Panc1 (cell line): ENCODE measurements at regions of chr1 and their contacts with region 1.

Region 1: GRCh38 chr1:113086541-113086940 is 13.5 kb downstream of the LRIG2 start:
- DNase-seq: no peak
- ATAC-seq: no peak
- H3K4me3 ChIP-seq: no peak overlapping the region
- H3K27ac ChIP-seq: no peak overlapping the region
- H3K4me1 ChIP-seq: no peaks in the 10 kb centered on the region
- H3K27me3 ChIP-seq: no peaks in the 10 kb centered on the region
- CTCF ChIP-seq: no peak

Region 2: GRCh38 chr1:112457241-112457640 is 629.3 kb before region 1 on chr1:
- CTCF ChIA-PET with region 1: no interaction called
- POLR2A ChIA-PET with region 1: no interaction called
- in situ Hi-C with region 1: no loop called
- intact Hi-C with region 1: no loop called
- DNase-seq: no peak
- ATAC-seq: no peak
- H3K4me3 ChIP-seq: no peak overlapping the region
- H3K27ac ChIP-seq: no peak overlapping the region
- H3K4me1 ChIP-seq: no peaks in the 10 kb centered on the region
- H3K27me3 ChIP-seq: no peaks in the 10 kb centered on the region
- CTCF ChIP-seq: no peak

Region 3: GRCh38 chr1:112981426-112981825 is 105.1 kb before region 1 on chr1:
- CTCF ChIA-PET with region 1: no interaction called
- POLR2A ChIA-PET with region 1: interaction called, 10 read pairs
- in situ Hi-C with region 1: no loop called
- intact Hi-C with region 1: no loop called
- DNase-seq: no peak
- ATAC-seq: no peak
- H3K4me3 ChIP-seq: no peak overlapping the region
- H3K27ac ChIP-seq: no peak overlapping the region
- H3K4me1 ChIP-seq: no peaks in the 10 kb centered on the region
- H3K27me3 ChIP-seq: no peaks in the 10 kb centered on the region
- CTCF ChIP-seq: no peak

Region 4: DNA sequence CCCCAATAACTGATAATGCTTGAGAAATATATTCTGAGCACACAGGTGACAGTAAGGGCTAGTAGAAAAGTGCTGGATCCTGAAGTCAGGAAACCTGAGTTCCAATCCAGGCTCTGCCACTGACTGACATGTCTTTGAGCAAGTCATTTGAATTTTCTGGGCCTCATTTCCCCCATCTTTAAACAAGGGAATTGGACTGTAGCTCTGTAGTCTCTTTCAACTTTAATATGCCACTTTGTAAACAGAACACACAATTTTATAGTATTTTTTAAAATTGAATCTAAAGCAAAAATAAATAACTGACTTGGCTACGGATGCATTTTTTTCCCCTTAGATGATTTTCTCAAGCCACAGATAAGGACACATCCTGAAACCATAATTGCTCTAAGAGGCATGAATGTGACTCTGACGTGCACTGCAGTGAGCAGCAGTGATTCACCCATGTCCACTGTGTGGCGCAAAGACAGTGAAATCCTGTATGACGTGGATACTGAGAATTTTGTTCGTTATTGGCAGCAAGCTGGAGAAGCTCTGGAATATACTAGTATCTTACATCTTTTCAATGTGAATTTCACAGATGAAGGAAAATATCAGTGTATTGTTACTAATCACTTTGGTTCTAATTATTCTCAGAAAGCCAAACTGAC is 23.5 kb after region 1 on chr1:
- CTCF ChIA-PET with region 1: interaction called, 10 read pairs
- POLR2A ChIA-PET with region 1: no interaction called
- in situ Hi-C with region 1: no loop called
- intact Hi-C with region 1: no loop called
- DNase-seq: no peak
- ATAC-seq: no peak
- H3K4me3 ChIP-seq: no peak overlapping the region
- H3K27ac ChIP-seq: no peak overlapping the region
- H3K4me1 ChIP-seq: no peaks in the 10 kb centered on the region
- H3K27me3 ChIP-seq: no peaks in the 10 kb centered on the region
- CTCF ChIP-seq: 0 out of 2 replicates have a peak, but pooled peaks have one; percentile 14